GM12878 (cell line): ENCODE measurements at regions of chr10 and their contacts with region 1.

Region 1: GRCh38 chr10:14611968-14612693 is 162.6 kb downstream of the FAM107B start:
- DNase-seq: no peak
- ATAC-seq: peak; percentile 63
- H3K4me3 ChIP-seq: no peak overlapping the region
- H3K27ac ChIP-seq: no peak overlapping the region
- H3K4me1 ChIP-seq: peaks cover 14% of the 10 kb centered on the region
- H3K27me3 ChIP-seq: no peaks in the 10 kb centered on the region
- CTCF ChIP-seq: no peak
- EP300 ChIP-seq: no peak
- POLR2A ChIP-seq: no peak
- RAD21 ChIP-seq: no peak

Region 2: GRCh38 chr10:13882112-13882711 is 729.9 kb before region 1 on chr10:
- CTCF ChIA-PET with region 1: no interaction called
- POLR2A ChIA-PET with region 1: no interaction called
- RAD21 ChIA-PET with region 1: no interaction called
- SMC1A ChIA-PET with region 1: no interaction called
- in situ Hi-C with region 1: no loop called
- intact Hi-C with region 1: no loop called
- DNase-seq: no peak
- ATAC-seq: no peak
- H3K4me3 ChIP-seq: no peak overlapping the region
- H3K27ac ChIP-seq: no peak overlapping the region
- H3K4me1 ChIP-seq: peaks cover 9% of the 10 kb centered on the region
- H3K27me3 ChIP-seq: no peaks in the 10 kb centered on the region
- CTCF ChIP-seq: no peak
- EP300 ChIP-seq: no peak
- POLR2A ChIP-seq: no peak
- RAD21 ChIP-seq: no peak

Region 3: DNA sequence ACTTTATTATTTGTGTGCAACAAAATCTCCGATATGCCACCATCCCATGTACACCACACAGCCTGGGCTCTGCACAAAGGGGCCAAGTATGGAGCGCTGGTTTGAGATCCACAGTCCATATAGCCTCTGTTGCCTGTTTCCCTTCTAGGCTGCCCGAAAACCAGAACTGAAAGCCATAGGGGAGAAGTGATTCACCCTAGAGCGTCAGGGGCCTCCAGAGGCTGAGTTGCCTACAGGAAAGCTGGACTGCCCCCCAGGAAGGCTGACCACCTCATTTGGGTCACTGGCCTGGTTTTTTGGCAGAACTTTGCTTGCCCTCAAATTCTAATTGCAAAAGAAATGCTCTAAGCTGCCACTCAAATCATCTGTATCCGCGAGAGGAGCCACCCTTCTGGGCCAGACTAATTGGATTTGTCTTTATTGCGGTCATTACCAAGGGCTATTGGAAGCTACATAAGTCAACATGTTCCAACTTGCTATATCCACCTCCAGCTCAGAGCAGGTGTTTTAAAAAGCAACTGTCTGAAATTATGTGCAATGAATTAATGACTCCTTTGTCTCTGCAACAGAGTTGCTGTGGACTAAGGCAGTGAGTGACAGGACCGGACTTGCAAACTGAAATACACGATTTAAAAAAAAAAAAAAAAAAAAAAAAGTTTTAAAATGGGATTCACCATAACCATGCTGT is 253.1 kb before region 1 on chr10:
- CTCF ChIA-PET with region 1: no interaction called
- POLR2A ChIA-PET with region 1: no interaction called
- RAD21 ChIA-PET with region 1: no interaction called
- SMC1A ChIA-PET with region 1: no interaction called
- in situ Hi-C with region 1: no loop called
- intact Hi-C with region 1: no loop called
- DNase-seq: no peak
- ATAC-seq: peak; percentile 31; the same call in 1 of the 3 replicates
- H3K4me3 ChIP-seq: no peak overlapping the region
- H3K27ac ChIP-seq: no peak overlapping the region
- H3K4me1 ChIP-seq: no peaks in the 10 kb centered on the region
- H3K27me3 ChIP-seq: peaks cover 3 to 5% of the 10 kb centered on the region in 2 experiments; a peak in 2 of 4 replicates
- CTCF ChIP-seq: no peak
- EP300 ChIP-seq: no peak
- POLR2A ChIP-seq: no peak
- RAD21 ChIP-seq: no peak

Region 4: GRCh38 chr10:14625192-14625631 is 13.1 kb after region 1 on chr10:
- CTCF ChIA-PET with region 1: interaction called, 6 read pairs
- POLR2A ChIA-PET with region 1: interaction called, 8 read pairs
- RAD21 ChIA-PET with region 1: interaction called, 3 read pairs
- SMC1A ChIA-PET with region 1: interaction called, 38 read pairs
- in situ Hi-C with region 1: no loop called
- intact Hi-C with region 1: no loop called
- DNase-seq: no peak
- ATAC-seq: no peak
- H3K4me3 ChIP-seq: no peak overlapping the region
- H3K27ac ChIP-seq: no peak overlapping the region
- H3K4me1 ChIP-seq: no peaks in the 10 kb centered on the region
- H3K27me3 ChIP-seq: no peaks in the 10 kb centered on the region
- CTCF ChIP-seq: no peak
- EP300 ChIP-seq: no peak
- POLR2A ChIP-seq: no peak
- RAD21 ChIP-seq: no peak

Region 5: GRCh38 chr10:14635043-14635710 is 23.0 kb after region 1 on chr10:
- CTCF ChIA-PET with region 1: interaction called, 5 read pairs
- POLR2A ChIA-PET with region 1: interaction called, 99 read pairs
- RAD21 ChIA-PET with region 1: interaction called, 5 read pairs
- SMC1A ChIA-PET with region 1: interaction called, 15 read pairs
- in situ Hi-C with region 1: no loop called
- intact Hi-C with region 1: no loop called
- DNase-seq: no peak
- ATAC-seq: no peak
- H3K4me3 ChIP-seq: no peak overlapping the region
- H3K27ac ChIP-seq: no peak overlapping the region
- H3K4me1 ChIP-seq: no peaks in the 10 kb centered on the region
- H3K27me3 ChIP-seq: 0 out of 4 replicates have a peak, but pooled peaks cover 0 to 2% of the 10 kb centered on the region in 2 experiments
- CTCF ChIP-seq: no peak
- EP300 ChIP-seq: no peak
- POLR2A ChIP-seq: no peak
- RAD21 ChIP-seq: no peak

Region 6: DNA sequence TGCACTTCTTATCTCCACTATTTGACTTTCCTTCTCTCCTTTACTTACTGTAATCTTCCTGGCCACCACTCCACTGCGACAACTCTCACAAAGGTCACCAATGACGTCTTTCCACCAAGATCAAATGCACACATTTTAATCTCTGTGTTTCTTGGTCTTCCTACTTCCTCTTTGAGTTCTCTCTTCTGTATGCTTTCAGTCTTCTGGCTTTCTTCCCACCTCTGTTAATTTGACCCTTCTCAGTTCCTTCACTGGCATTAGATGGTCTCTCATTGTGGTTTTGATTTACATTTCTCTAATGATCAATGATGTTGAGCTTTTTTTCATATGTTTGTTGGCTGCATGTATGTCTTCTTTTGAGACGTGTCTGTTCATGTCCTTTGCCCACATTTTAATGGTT is 130.7 kb after region 1 on chr10:
- CTCF ChIA-PET with region 1: interaction called, 3 read pairs
- POLR2A ChIA-PET with region 1: no interaction called
- RAD21 ChIA-PET with region 1: interaction called, 3 read pairs
- SMC1A ChIA-PET with region 1: interaction called, 13 read pairs
- in situ Hi-C with region 1: loop called (anchors 5 kb)
- intact Hi-C with region 1: no loop called
- DNase-seq: peak; percentile 76
- ATAC-seq: peak; percentile 92
- H3K4me3 ChIP-seq: no peak overlapping the region
- H3K27ac ChIP-seq: peak overlapping the region; percentile 69
- H3K4me1 ChIP-seq: peaks cover 32% of the 10 kb centered on the region
- H3K27me3 ChIP-seq: no peaks in the 10 kb centered on the region
- CTCF ChIP-seq: no peak
- EP300 ChIP-seq: peak; percentile 90 to 98; a peak in 3 of 4 replicates
- POLR2A ChIP-seq: no peak
- RAD21 ChIP-seq: no peak

Region 7: DNA sequence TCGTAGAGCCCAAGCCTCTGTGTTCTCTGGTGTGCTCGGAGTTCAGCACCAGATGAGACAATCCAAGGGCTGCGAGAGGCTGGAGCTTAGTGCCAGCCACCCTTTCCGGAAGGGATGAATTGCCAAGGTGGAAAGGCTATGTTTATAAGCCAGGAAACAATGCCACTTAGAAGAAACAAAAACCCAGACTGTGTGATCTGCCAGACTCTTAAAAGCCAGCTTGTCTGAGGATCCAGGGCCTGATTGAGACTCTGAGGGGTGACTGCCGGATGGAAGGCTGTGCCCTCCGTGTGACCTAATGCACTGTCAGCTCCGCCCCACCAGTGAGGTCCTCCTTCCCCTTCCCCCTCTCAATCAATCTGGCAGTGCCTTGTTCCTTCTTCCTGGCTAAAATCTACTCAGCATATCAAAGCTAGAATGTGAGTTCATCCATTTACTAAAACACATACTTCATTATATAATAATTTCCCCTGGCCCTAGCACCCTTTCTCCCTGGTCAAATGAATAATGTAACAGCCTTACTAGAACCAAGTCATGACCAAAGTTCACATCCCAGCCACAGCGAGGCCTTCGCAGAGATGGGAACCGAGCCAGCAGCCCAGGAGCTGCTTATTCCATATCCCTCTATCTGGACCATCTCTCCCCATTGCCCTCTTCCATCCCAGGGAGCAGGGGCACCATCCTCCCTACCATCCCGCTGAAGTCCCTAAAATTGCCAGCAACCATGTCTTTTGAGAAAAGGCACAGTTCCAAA is 137.1 kb after region 1 on chr10:
- CTCF ChIA-PET with region 1: no interaction called
- POLR2A ChIA-PET with region 1: no interaction called
- RAD21 ChIA-PET with region 1: no interaction called
- SMC1A ChIA-PET with region 1: interaction called, 13 read pairs
- in situ Hi-C with region 1: loop called (anchors 5 kb)
- intact Hi-C with region 1: no loop called
- DNase-seq: no peak
- ATAC-seq: peak; percentile 81
- H3K4me3 ChIP-seq: no peak overlapping the region
- H3K27ac ChIP-seq: no peak overlapping the region
- H3K4me1 ChIP-seq: peaks cover 17% of the 10 kb centered on the region
- H3K27me3 ChIP-seq: no peaks in the 10 kb centered on the region; a peak in 1 of 4 replicates
- CTCF ChIP-seq: no peak
- EP300 ChIP-seq: no peak
- POLR2A ChIP-seq: no peak
- RAD21 ChIP-seq: no peak